ENCODE measurements at regions of chr6 and their contacts with region 1.

Region 1: DNA sequence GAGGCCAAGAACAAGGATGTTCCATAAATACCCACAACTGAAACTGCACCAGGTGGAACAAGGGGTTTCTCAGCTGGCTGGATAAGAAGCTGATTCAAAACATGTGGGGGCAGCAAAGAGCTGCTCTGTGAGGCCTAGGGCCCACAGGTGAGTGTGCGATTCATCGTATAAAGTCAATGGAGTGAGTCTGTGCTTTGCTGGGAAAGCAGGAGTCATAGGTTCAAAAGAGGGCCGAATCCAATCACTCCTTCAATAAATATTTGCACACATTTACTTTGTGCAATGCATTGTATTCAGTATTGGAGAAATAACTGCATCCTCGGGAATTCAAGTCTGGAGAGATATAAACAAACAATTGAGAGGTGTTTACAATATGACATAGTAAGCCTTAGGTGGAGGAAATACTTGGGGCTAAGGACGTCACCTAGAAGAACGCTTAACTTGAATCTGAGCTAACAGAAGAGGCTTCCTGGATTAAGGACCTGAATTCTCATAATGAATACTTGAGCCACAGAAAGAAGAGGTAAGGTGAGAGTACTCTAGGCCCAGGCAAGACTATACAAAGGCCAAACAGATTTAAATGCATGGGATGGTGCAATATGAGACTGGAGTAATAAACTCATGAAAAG is 83.7 kb upstream of the TMEM30A start:
- DNase-seq: peak in 1 of 2 experiments; percentile 24
- H3K4me3 ChIP-seq: no peak overlapping the region
- H3K27ac ChIP-seq: no peak overlapping the region
- H3K4me1 ChIP-seq: no peaks in the 10 kb centered on the region
- H3K27me3 ChIP-seq: no peaks in the 10 kb centered on the region
- CTCF ChIP-seq: peak; percentile 38; the same call in 1 of the 2 replicates

Region 2: DNA sequence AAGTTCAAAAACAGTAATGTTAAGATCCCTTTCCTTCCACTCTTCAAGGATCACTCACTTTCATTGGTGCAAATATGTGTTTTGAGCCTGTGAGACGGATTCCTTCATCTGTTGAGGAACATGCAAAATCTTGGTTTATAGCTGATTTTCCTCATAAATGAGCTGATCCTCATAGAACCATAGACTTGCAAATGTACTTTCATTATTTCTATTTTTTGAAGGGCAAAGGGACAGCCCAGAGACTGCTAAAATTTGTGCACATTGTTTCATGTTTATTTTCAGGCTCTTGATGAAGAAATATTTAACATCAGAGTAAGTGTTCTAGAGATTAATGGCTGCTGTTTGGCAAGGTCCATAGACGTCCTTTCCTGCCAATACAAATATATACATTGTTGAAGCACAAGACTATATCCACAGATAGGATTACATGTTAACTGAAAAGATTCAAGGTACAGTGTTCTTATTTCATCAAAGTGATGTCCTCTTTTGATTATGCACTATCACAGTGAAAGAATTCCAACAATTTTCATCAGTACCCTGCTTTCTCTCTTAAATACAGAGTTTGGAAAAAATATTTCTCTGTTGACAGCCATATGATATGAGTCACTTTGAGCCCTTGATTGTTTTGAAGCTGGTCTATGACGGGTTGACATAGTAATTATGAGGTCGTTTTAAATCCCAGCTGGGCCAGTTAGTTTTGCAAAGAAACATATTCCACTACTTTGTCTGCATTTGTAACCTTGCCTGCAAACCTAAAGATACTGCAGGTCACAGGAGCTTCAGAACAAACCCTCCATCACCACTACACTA is 29.6 kb after region 1 on chr6:
- CTCF ChIA-PET with region 1: no interaction called
- POLR2A ChIA-PET with region 1: no interaction called
- intact Hi-C with region 1: no loop called
- DNase-seq: no peak
- H3K4me3 ChIP-seq: no peak overlapping the region
- H3K27ac ChIP-seq: no peak overlapping the region
- H3K4me1 ChIP-seq: no peaks in the 10 kb centered on the region
- H3K27me3 ChIP-seq: no peaks in the 10 kb centered on the region
- CTCF ChIP-seq: no peak

Region 3: GRCh38 chr6:75546381-75546780 is 178.1 kb after region 1 on chr6:
- CTCF ChIA-PET with region 1: no interaction called
- POLR2A ChIA-PET with region 1: interaction called, 16 read pairs
- intact Hi-C with region 1: no loop called
- DNase-seq: no peak
- H3K4me3 ChIP-seq: no peak overlapping the region
- H3K27ac ChIP-seq: no peak overlapping the region
- H3K4me1 ChIP-seq: no peaks in the 10 kb centered on the region
- H3K27me3 ChIP-seq: no peaks in the 10 kb centered on the region
- CTCF ChIP-seq: peak; percentile 48

Measured in PC-9 (cell line).